MCF 10A (cell line): ENCODE measurements at regions of chr4 and their contacts with region 1.

Region 1: DNA sequence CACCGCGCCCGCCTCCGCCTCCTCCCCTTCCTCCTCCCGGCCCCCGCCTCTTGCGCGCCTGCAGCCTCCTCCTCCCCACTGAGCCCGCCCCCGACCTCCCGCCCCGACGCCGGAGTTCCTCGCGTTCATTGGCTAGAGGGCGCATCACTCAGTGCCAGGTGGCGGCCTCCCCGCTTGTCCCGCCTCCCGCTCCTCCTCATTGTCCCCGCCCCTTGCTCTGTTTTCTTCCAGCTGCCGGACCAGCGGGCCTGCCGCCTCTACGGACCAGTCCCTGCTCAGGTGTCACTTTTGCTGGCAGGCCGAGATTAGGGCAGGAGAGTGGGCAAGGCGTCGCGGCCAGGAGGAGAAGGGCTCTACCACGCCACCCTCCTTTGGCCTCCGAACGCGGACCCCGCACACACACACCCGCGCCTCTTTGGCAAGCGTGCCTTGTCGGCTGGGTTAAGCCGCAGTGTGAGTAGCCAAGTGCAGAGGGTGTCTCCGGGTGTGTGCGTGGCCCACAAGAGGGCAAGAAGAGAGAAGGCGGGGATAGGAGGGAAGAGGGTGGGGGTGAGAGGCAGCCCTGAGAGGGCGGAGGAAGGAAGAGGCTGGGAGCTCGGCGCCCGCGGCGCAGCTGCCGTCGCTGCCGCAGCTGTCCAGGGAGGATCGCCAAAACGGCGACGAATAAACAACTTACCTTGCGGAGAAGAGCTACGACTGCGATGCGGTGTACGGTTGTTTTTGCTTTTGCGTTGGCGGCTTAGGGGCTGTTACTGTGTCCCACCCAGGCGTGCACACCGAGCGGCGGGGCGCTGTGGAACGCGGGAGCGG is 436 bp upstream of the PPP3CA start:
- DNase-seq: peak; percentile 97
- H3K4me3 Mint-ChIP-seq: peak overlapping the region; percentile 90
- H3K27ac Mint-ChIP-seq: peak overlapping the region; percentile 96
- H3K4me1 Mint-ChIP-seq: peaks cover 33% of the 10 kb centered on the region
- H3K27me3 Mint-ChIP-seq: no peaks in the 10 kb centered on the region
- CTCF ChIP-seq: no peak

Region 2: GRCh38 chr4:100907465-100908454 is 440.0 kb before region 1 on chr4:
- CTCF ChIA-PET with region 1: no interaction called
- POLR2A ChIA-PET with region 1: no interaction called
- intact Hi-C with region 1: loop called (anchors 2 kb)
- DNase-seq: peak; percentile 31
- H3K4me3 Mint-ChIP-seq: no peak overlapping the region
- H3K27ac Mint-ChIP-seq: no peak overlapping the region
- H3K4me1 Mint-ChIP-seq: peaks cover 4% of the 10 kb centered on the region
- H3K27me3 Mint-ChIP-seq: no peaks in the 10 kb centered on the region
- CTCF ChIP-seq: peak; percentile 39

Region 3: GRCh38 chr4:101187841-101188240 is 159.9 kb before region 1 on chr4:
- CTCF ChIA-PET with region 1: interaction called, 18 read pairs
- POLR2A ChIA-PET with region 1: interaction called, 10 read pairs
- intact Hi-C with region 1: loop called (anchors 1 kb)
- DNase-seq: peak; percentile 43
- H3K4me3 Mint-ChIP-seq: no peak overlapping the region
- H3K27ac Mint-ChIP-seq: no peak overlapping the region
- H3K4me1 Mint-ChIP-seq: peaks cover 26% of the 10 kb centered on the region
- H3K27me3 Mint-ChIP-seq: no peaks in the 10 kb centered on the region
- CTCF ChIP-seq: peak; percentile 30

Region 4: GRCh38 chr4:101321481-101322042 is 26.2 kb before region 1 on chr4:
- CTCF ChIA-PET with region 1: no interaction called
- POLR2A ChIA-PET with region 1: interaction called, 23 read pairs
- intact Hi-C with region 1: no loop called
- DNase-seq: peak; percentile 44
- H3K4me3 Mint-ChIP-seq: no peak overlapping the region
- H3K27ac Mint-ChIP-seq: peak overlapping the region; percentile 37
- H3K4me1 Mint-ChIP-seq: peaks cover 21% of the 10 kb centered on the region
- H3K27me3 Mint-ChIP-seq: no peaks in the 10 kb centered on the region
- CTCF ChIP-seq: no peak

Region 5: GRCh38 chr4:101649790-101650515 is 302.2 kb after region 1 on chr4:
- CTCF ChIA-PET with region 1: interaction called, 4 read pairs
- POLR2A ChIA-PET with region 1: interaction called, 29 read pairs
- intact Hi-C with region 1: no loop called
- DNase-seq: peak; percentile 78
- H3K4me3 Mint-ChIP-seq: peak overlapping the region; percentile 11
- H3K27ac Mint-ChIP-seq: peak overlapping the region; percentile 4
- H3K4me1 Mint-ChIP-seq: peaks cover 29% of the 10 kb centered on the region
- H3K27me3 Mint-ChIP-seq: no peaks in the 10 kb centered on the region
- CTCF ChIP-seq: no peak